ENCODE measurements at regions of chr6 and their contacts with region 1.

Region 1: DNA sequence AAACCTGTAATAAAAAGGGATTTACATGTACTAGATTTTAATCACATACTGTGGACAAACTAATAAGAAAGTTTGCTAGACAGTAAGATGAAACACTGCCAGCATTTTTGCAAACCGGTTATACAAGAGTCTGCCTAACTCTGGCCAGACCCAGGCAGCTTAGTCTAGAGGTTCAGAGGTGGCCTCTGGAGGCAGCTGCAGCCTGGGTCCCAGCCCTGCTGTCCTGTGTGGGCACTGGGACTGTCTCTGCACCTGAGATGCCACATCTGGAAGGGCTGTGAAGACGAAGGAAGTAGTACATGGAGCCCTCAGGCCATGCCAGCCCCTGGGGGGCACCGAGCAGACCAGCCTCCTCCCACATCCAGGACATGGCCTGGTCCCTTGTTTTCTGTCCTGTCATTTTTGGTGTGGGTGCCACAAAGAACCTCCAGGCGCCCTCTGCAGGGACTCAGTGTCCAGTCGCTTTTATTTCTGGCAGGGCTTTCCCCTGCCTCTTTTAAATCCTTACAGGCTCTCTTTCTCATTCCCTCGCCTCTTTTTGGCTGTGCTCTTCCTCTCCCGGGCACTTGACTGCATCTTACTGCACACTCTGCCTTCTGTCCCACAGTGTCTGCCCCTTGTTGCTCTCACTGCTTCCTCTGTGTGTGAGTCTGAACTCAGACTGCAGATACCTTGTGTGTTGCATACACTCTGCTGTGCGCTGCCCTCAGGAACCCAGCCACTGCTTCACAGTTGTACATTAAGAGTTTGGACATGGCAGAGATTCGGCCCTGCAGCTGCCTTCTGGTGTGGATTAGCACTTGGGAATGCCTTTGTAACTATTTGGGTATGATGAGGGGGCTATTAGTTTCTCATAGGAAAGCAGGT is 216.7 kb downstream of the ZDHHC14 start:
- DNase-seq: peak; percentile 94
- H3K4me3 ChIP-seq: peak overlapping the region in 1 of 2 donors; percentile 5
- H3K27ac ChIP-seq: peak overlapping the region; percentile 76 to 81
- H3K4me1 ChIP-seq: peaks cover 16% of the 10 kb centered on the region
- H3K27me3 ChIP-seq: no peaks in the 10 kb centered on the region
- CTCF ChIP-seq: peak in 3 of 4 experiments; percentile 50 to 67 (median 62)
- POLR2A ChIP-seq: no peak

Region 2: DNA sequence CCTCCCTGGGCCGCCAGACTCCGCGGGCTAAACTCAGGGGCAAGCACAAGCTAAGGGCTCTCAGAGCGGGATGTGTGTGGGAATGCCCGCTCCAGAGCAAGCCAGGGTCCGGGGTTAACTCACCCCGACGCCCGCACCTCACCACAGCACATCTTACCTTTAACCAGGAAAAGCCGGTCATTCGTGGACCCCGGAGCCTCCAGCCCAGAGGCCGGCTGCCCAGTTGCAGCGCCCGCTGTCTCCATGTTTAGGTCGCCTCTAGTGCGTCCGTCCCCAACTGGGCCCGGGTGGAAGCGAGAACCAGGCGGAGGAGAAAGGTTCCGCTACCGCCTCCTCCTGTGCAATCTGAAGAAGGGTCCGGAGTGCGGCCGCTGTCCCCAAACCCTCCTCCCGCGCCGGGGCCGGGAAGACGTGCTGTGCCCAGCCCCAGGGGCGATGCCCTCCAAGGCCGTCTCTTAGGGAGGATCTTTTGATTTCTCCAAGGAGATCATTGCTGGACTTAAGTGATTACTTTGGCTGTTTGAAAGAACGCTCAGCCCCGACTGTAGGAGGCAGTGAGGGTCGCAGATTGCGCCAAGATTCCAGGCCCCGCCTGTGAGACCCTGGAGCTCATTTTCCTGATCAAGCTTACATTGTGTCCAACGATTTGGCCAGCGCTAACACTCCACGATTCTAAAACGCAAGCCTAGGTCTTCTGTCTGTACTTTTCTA is 274.3 kb before region 1 on chr6 and contains the start of gene TMEM242:
- intact Hi-C with region 1: loop called (anchors 5 kb)
- DNase-seq: peak; percentile 84
- H3K4me3 ChIP-seq: peak within 1 kb of the TSS; percentile 73 to 78
- H3K27ac ChIP-seq: peak within 1 kb of the TSS; percentile 83 to 92
- H3K4me1 ChIP-seq: no peaks in the 10 kb centered on the region
- H3K27me3 ChIP-seq: no peaks in the 10 kb centered on the region
- CTCF ChIP-seq: peak in 3 of 4 experiments; percentile 16 to 51 (median 41)
- POLR2A ChIP-seq: peak; percentile 76
- total RNA-seq, gene TMEM242: 6.4 to 8.5 TPM

Region 3: GRCh38 chr6:157527471-157527907 is 70.2 kb before region 1 on chr6:
- intact Hi-C with region 1: loop called (anchors 5 kb)
- DNase-seq: no peak
- H3K4me3 ChIP-seq: no peak overlapping the region
- H3K27ac ChIP-seq: no peak overlapping the region
- H3K4me1 ChIP-seq: no peaks in the 10 kb centered on the region
- H3K27me3 ChIP-seq: no peaks in the 10 kb centered on the region
- CTCF ChIP-seq: no peak
- POLR2A ChIP-seq: no peak

Region 4: GRCh38 chr6:157764178-157765033 is 166.7 kb after region 1 on chr6:
- intact Hi-C with region 1: no loop called
- DNase-seq: peak; percentile 70
- H3K4me3 ChIP-seq: no peak overlapping the region
- H3K27ac ChIP-seq: peak overlapping the region; percentile 2 to 44
- H3K4me1 ChIP-seq: peaks cover 5% of the 10 kb centered on the region
- H3K27me3 ChIP-seq: no peaks in the 10 kb centered on the region
- CTCF ChIP-seq: no peak
- POLR2A ChIP-seq: no peak

Measured in prostate gland (tissue), 2 donors.